Activated T-helper 2 cell treated with anti-CD3 and anti-CD28 coated beads, Interferon-gamma antibody, Interleukin-2, Interleukin-4, amounts not matched to agents 10 μg/mL and 5 μg/mL and 100 μg/mL, durations not matched to agents 14 hours and 24 hours and 36 hours (primary cell): ENCODE measurements at regions of chr14 and their contacts with region 1.

Region 1: DNA sequence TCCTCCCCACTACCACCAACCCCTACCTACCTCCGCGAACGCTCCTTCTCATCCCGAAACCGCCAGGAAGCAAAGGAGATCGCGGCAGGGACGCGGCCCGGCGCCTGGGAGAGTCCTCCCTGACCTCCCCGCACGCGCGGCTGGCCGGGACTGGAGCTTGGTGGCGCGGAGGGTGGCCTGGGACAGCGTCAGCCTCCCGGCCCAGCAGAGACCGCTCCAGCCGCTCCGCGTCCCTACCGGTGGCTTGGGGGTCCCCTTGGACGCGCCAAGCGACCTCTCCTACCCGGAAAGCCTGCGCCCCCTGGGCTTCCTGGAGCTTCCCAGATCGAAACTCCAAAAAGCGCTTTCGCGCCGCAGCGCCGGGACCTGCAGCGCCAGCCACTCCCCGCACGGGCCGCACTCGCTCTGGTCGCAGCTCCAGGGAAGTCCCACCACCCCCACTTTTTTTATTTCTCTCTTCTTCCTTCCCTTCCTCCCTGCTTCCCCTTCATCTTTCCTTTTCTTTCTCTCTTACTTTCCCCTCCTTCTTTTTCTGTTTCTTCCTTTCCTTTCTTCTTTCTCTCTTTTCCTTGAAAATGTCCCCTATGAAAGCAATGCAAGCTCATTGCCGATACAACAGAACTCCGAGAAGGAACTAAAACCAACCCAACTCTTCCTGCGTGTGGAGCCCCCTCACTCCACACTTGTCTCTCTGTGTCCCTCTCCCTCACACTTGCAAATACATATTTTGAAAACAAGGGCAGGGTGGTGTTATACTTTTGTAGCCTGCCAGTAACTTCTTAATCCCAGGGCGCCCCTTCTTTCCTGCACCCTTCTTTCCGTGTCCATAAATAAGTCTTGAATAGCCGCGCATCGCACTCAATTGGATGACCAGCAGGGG is 3.8 kb downstream of the DIO3 start:
- DNase-seq: no peak
- H3K4me3 Mint-ChIP-seq: no peak overlapping the region
- H3K27ac Mint-ChIP-seq: no peak overlapping the region
- H3K4me1 Mint-ChIP-seq: no peaks in the 10 kb centered on the region
- H3K27me3 Mint-ChIP-seq: peaks cover 64% of the 10 kb centered on the region

Region 2: GRCh38 chr14:101458526-101459391 is 106.3 kb before region 1 on chr14:
- intact Hi-C with region 1: loop called (anchors 5 kb)
- DNase-seq: no peak
- H3K4me3 Mint-ChIP-seq: no peak overlapping the region
- H3K27ac Mint-ChIP-seq: no peak overlapping the region
- H3K4me1 Mint-ChIP-seq: no peaks in the 10 kb centered on the region
- H3K27me3 Mint-ChIP-seq: peaks cover 50% of the 10 kb centered on the region